Right ventricle myocardium inferior (tissue), 1 donor: ENCODE measurements at regions of chr20 and their contacts with region 1.

Region 1: DNA sequence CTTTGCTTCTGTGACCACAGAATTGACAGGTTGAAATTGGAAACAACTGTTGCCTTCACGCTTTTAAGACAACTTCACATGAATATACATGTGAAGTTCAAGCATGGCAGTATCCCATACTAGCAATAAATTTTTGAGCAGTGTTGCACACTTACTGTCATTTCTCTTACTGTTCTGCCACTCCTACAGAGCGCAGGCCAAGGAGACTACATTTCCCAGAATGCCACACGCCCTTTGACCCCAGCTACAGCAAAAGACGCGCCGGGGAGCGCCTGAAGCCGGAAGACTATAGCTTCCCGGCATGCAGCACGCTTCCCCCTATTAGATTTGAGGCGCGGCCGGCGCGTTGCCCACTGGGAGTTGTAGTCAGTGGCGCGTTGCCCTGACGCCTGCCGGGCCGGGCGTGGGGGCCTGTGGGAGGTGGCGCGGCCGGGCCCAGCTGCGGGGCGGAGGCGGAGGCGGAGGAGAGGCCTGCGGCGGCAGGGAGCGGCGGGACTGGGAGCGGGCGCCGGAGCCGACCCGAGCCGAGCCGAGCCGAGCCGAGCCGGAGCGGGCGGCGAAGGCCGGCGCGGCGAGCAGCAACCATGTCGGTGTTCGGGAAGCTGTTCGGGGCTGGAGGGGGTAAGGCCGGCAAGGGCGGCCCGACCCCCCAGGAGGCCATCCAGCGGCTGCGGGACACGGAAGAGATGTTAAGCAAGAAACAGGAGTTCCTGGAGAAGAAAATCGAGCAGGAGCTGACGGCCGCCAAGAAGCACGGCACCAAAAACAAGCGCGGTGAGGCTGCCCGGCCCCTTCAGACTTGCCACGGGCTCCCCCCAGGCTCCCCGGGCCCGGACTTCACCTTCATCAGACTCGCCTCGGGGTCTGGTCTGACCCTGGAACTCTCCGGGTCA is at the start of gene CHMP4B:
- DNase-seq: peak; percentile 100
- ATAC-seq: peak; percentile 99
- total RNA-seq, gene CHMP4B: 108 TPM

Region 2: DNA sequence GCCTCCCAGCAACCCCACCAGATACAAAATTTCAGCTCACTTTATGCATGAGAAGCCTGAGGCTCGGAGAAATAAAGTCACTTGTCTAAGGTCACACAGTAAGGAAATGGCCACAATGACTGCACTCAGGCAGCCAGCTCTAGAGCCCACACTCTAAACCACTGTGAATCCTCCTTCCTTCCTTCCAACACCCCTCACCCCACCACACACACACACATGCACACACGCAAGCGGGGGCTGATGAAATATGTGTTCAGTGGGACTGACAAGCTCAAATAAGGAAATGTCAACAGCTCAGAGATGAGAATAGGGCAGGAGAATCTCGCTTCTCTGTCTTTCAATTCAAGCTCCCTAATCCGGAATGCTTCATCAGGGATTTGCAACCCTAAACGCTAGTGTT is 581.3 kb before region 1 on chr20:
- intact Hi-C with region 1: no loop called
- DNase-seq: no peak
- ATAC-seq: no peak

Region 3: GRCh38 chr20:33686100-33686983 is 124.8 kb before region 1 on chr20 and contains the start of gene E2F1:
- intact Hi-C with region 1: no loop called
- DNase-seq: peak; percentile 99
- ATAC-seq: peak; percentile 99
- total RNA-seq, gene E2F1: 2.3 TPM

Region 4: DNA sequence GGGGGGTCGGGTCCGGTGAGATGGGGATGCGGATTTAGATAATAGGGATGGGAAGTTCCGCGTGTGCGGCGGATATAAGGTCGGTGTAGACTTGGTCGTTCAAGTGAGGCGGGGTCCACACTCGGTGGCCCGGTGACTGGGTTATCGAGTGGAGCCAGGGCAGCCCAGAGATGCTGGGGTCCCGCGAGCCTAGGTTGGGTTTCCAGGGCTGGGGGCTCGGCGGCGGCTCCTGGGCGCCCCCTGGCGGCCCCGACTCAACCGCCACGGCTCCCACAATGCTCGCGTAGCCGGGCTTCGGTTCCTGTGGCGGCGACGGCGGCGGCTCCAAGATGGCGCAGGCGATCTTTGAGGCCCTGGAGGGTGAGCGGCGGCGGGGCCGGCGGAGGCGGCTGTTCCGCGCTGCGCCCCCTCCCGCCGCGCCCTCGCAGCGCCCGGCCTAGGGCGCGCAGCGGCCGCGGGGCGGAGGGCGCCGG is 79.4 kb before region 1 on chr20 and contains the start of gene ZNF341:
- intact Hi-C with region 1: loop called (anchors 5 kb)
- DNase-seq: peak; percentile 95
- ATAC-seq: peak; percentile 91
- total RNA-seq, gene ZNF341: 1.8 TPM

Region 5: GRCh38 chr20:33992923-33993575 is 181.9 kb after region 1 on chr20:
- intact Hi-C with region 1: loop called (anchors 5 kb)
- DNase-seq: peak; percentile 99
- ATAC-seq: peak; percentile 95